ENCODE measurements at regions of chr14 and their contacts with region 1.

Region 1: DNA sequence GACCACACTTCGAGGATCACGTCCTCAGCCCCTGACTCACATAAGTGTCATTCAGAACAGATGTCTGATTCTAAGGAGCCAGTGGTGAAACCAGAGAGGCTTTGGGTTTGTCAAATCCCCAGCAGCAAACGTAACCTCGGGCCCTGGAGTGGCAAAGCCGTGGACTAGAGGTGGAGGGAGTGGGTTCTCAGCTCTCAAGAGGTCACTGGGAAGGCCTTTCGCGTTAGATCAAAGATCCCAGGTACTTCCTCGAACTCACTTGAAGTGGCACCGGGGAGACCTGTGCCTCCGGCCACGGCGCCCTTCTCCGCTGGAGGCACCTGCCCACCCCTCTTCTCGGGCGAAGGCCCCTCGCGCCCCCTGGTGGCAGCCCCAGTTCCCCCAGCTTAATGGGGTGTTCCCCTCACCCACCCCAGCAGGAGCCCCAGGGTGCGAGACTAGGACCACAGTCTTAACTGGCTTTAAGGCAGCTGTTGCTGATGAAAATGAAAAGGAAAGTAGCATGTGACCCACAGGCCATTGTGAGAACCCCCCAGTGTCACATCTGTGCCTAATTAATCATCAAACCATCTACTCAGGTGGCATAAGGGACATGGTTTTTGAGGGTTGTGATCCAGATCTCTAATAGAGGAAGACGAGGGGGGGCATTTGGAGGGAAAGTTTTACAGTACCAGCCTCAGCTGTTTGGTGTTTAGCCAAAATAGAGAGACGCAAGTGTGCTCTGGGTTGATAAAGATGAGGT is 672 bp upstream of the ESR2 start:
- DNase-seq: peak; percentile 72
- ATAC-seq: peak; percentile 94

Region 2: GRCh38 chr14:63795532-63795931 is 499.3 kb before region 1 on chr14:
- intact Hi-C with region 1: loop called (anchors 5 to 10 kb)
- DNase-seq: no peak
- ATAC-seq: no peak

Region 3: GRCh38 chr14:64137657-64138290 is 157.1 kb before region 1 on chr14:
- intact Hi-C with region 1: loop called in 1 of 2 experiments (anchors 5 kb)
- DNase-seq: no peak
- ATAC-seq: no peak

Region 4: GRCh38 chr14:64159588-64159987 is 135.3 kb before region 1 on chr14:
- intact Hi-C with region 1: loop called (anchors 2 to 10 kb)
- DNase-seq: no peak
- ATAC-seq: no peak

Region 5: DNA sequence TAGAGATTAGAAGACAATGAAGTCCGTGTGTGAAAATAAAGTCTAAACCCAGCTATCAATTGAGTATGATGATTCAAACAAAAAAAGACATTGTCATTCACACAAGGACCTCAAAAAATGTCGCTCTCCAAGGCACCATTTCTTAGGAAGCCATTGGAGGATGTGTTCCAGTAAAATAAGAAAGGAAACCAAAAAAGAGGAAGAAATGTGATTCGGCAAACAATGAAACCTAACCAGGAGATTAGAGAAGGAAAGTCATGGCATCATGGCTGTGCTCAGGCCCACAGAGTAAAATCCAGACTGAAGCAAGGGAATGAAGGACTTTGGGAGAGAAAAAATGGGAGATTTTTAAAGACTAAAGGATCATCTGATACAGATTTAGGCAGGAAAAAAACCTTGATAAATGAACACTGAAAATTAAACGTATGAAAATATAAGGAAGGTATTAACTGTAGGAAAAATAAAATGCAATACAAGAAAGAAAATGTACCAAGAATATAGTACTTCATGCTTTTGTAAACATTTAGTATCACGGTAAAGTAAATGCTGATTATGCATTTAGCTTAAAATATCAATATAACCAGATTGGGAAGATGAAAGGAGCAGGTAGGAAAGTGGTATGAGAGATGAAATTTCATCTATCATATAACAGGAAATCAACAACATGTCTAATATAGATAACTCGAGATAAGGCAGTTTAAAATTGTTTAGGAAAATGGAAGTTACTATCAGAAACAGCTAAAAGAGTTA is 55.1 kb after region 1 on chr14:
- intact Hi-C with region 1: no loop called
- DNase-seq: no peak
- ATAC-seq: no peak

Measured in left cardiac atrium (tissue), 4 donors.